Naive thymus-derived CD4-positive, alpha-beta T cell (primary cell): ENCODE measurements at regions of chr17 and their contacts with region 1.

Region 1: DNA sequence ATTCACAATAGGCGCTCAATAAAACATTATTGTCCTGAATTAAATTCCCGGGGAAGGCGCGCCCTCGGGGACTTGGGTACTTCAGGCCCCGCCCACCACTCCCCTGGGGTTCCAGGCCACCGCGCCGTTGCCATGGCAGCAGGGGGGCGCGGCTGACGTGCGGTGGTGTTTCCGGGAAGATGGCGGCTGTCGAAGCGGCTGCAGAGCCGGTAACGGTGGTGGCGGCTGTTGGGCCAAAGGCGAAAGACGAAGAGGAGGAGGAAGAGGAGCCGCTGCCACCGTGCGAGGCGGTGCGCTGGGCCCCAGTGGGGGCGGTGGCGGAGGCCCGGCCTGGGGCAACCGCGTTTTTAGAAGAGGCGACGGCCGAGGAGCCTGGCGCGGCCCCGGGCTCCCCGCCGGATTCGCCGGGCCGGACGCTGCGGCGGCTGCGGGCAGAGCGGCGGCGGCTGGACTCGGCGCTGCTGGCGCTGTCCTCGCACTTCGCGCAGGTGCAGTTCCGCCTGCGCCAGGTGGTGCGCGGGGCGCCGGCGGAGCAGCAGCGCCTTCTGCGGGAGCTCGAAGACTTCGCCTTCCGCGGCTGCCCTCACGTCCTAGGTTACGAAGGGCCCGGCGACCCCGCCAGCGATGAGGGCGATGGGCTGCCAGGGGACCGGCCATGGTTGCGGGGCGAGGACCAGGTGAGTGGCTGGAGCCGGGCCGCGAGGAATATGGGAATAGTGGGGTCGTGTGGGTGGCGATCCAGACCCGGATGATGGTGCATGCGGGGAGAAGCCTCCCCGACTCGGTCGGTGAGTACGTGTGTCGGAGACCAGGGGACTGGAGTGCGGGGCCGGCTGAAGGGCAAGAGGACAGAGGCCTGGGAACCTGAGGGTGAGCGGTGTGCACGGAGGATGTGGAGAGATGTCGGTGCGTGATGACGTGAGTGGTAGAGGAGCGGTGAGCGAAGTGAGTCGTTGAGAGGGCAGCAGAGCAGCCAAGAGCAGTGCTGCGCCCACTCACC is at the start of gene RUNDC1:
- DNase-seq: peak; percentile 81 to 93 (median 87)
- ATAC-seq: peak; percentile 93
- H3K4me3 ChIP-seq: peak within 1 kb of the TSS; percentile 81
- H3K4me3 Mint-ChIP-seq: peak within 1 kb of the TSS; percentile 96 to 99 (median 98)
- H3K27ac ChIP-seq: peak within 1 kb of the TSS; percentile 84
- H3K27ac Mint-ChIP-seq: peak within 1 kb of the TSS; percentile 83 to 98 (median 94)
- H3K4me1 ChIP-seq: peaks cover 4 to 16% of the 10 kb centered on the region in 2 donors
- H3K4me1 Mint-ChIP-seq: peaks cover 25 to 42% (median 38%) of the 10 kb centered on the region in 7 donors
- H3K27me3 ChIP-seq: no peaks in the 10 kb centered on the region
- H3K27me3 Mint-ChIP-seq: no peaks in the 10 kb centered on the region
- total RNA-seq, gene RUNDC1: 12.2 to 21.4 (median 19.4) TPM

Region 2: GRCh38 chr17:42720996-42721583 is 259.6 kb before region 1 on chr17:
- CTCF ChIA-PET with region 1: no interaction called
- POLR2A ChIA-PET with region 1: no interaction called
- intact Hi-C with region 1: loop called in 1 of 2 experiments (anchors 1 kb)
- DNase-seq: peak in 7 of 9 donors; percentile 43 to 74 (median 62)
- ATAC-seq: peak; percentile 87
- H3K4me3 ChIP-seq: no peak overlapping the region
- H3K4me3 Mint-ChIP-seq: no peak overlapping the region
- H3K27ac ChIP-seq: no peak overlapping the region
- H3K27ac Mint-ChIP-seq: no peak overlapping the region
- H3K4me1 ChIP-seq: no peaks in the 10 kb centered on the region
- H3K4me1 Mint-ChIP-seq: peaks cover 0 to 5% (median 4%) of the 10 kb centered on the region in 7 donors
- H3K27me3 ChIP-seq: no peaks in the 10 kb centered on the region
- H3K27me3 Mint-ChIP-seq: no peaks in the 10 kb centered on the region

Region 3: GRCh38 chr17:42832974-42833766 is 147.5 kb before region 1 on chr17 and contains the start of gene PSME3:
- CTCF ChIA-PET with region 1: no interaction called
- POLR2A ChIA-PET with region 1: no interaction called
- intact Hi-C with region 1: loop called in 1 of 2 experiments (anchors 1 kb)
- DNase-seq: peak; percentile 83 to 91 (median 89)
- ATAC-seq: peak; percentile 94
- H3K4me3 ChIP-seq: peak within 1 kb of the TSS; percentile 100
- H3K4me3 Mint-ChIP-seq: peak within 1 kb of the TSS; percentile 95 to 98 (median 97)
- H3K27ac ChIP-seq: peak within 1 kb of the TSS; percentile 98
- H3K27ac Mint-ChIP-seq: peak within 1 kb of the TSS; percentile 97 to 100 (median 99)
- H3K4me1 ChIP-seq: peaks cover 10 to 16% of the 10 kb centered on the region in 2 donors
- H3K4me1 Mint-ChIP-seq: peaks cover 11 to 40% (median 33%) of the 10 kb centered on the region in 7 donors
- H3K27me3 ChIP-seq: no peaks in the 10 kb centered on the region
- H3K27me3 Mint-ChIP-seq: peaks cover 0 to 7% (median 2%) of the 10 kb centered on the region in 5 donors
- total RNA-seq, gene PSME3: 53.8 to 116 (median 65.9) TPM

Region 4: GRCh38 chr17:42964161-42964932 is 16.4 kb before region 1 on chr17 and contains the start of gene AARSD1:
- CTCF ChIA-PET with region 1: no interaction called
- POLR2A ChIA-PET with region 1: interaction called, 3 read pairs
- intact Hi-C with region 1: loop called (anchors 2 kb)
- DNase-seq: peak; percentile 77 to 92 (median 90)
- ATAC-seq: peak; percentile 99
- H3K4me3 ChIP-seq: peak within 1 kb of the TSS; percentile 96
- H3K4me3 Mint-ChIP-seq: peak within 1 kb of the TSS; percentile 89 to 99 (median 94)
- H3K27ac ChIP-seq: peak within 1 kb of the TSS; percentile 77
- H3K27ac Mint-ChIP-seq: peak within 1 kb of the TSS; percentile 86 to 97 (median 94)
- H3K4me1 ChIP-seq: peaks cover 5 to 10% of the 10 kb centered on the region in 2 donors
- H3K4me1 Mint-ChIP-seq: peaks cover 11 to 23% (median 18%) of the 10 kb centered on the region in 7 donors
- H3K27me3 ChIP-seq: no peaks in the 10 kb centered on the region
- H3K27me3 Mint-ChIP-seq: peaks cover 0 to 2% (median 0%) of the 10 kb centered on the region in 5 donors
- total RNA-seq, gene AARSD1: 46.5 to 86.7 (median 56.6) TPM